Posterior vena cava (tissue), 2 donors: ENCODE measurements at regions of chr18 and their contacts with region 1.

Region 1: GRCh38 chr18:37368110-37368954 is 197.3 kb downstream of the CELF4 start:
- DNase-seq: no peak

Region 2: DNA sequence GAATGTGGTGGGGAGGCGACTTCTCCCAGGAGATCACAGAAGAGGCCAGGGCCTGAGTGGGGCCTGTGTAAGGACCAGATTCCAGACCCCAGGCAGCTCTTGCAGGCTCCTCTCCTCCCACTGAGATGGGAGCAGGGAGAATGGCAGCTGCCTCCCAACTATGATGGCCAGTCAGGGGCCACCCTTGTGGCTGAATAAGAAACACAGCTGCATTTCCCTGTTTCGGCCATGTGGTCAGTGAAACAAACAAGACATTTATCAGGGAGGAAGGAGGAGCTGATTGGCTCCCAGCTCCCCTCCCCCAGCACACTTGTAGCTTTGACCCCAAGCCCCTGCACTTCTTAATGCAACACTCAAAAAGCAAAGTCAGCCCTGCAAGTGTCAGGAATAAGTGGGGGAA is 53.8 kb after region 1 on chr18:
- intact Hi-C with region 1: loop called in 1 of 2 experiments (anchors 2 kb)
- DNase-seq: no peak